Heart left ventricle (tissue), 16 donors: ENCODE measurements at regions of chr4 and their contacts with region 1.

Region 1: GRCh38 chr4:122346036-122346435 is 32.8 kb upstream of the ADAD1 start:
- DNase-seq: no peak
- ATAC-seq: no peak
- H3K4me3 ChIP-seq: no peak overlapping the region
- H3K27ac ChIP-seq: no peak overlapping the region
- H3K4me1 ChIP-seq: no peaks in the 10 kb centered on the region
- H3K27me3 ChIP-seq: no peaks in the 10 kb centered on the region
- CTCF ChIP-seq: no peak
- POLR2A ChIP-seq: no peak

Region 2: GRCh38 chr4:122309988-122310626 is 35.9 kb before region 1 on chr4:
- intact Hi-C with region 1: loop called in 1 of 10 experiments (anchors 5 kb)
- DNase-seq: no peak
- ATAC-seq: no peak
- H3K4me3 ChIP-seq: no peak overlapping the region
- H3K27ac ChIP-seq: no peak overlapping the region
- H3K4me1 ChIP-seq: peaks cover 0 to 8% (median 0%) of the 10 kb centered on the region in 12 donors
- H3K27me3 ChIP-seq: no peaks in the 10 kb centered on the region
- CTCF ChIP-seq: peak; percentile 10 to 57 (median 38)
- POLR2A ChIP-seq: no peak

Region 3: GRCh38 chr4:122500852-122501501 is 154.9 kb after region 1 on chr4:
- intact Hi-C with region 1: no loop called
- DNase-seq: no peak
- ATAC-seq: peak in 1 of 4 donors; percentile 50
- H3K4me3 ChIP-seq: no peak overlapping the region
- H3K27ac ChIP-seq: no peak overlapping the region
- H3K4me1 ChIP-seq: peaks cover 0 to 5% (median 0%) of the 10 kb centered on the region in 12 donors
- H3K27me3 ChIP-seq: no peaks in the 10 kb centered on the region
- CTCF ChIP-seq: no peak
- POLR2A ChIP-seq: no peak